ENCODE measurements at regions of chr19 and their contacts with region 1.

Region 1: GRCh38 chr19:17292286-17293097 is 10.7 kb downstream of the ABHD8 start:
- DNase-seq: peak; percentile 90
- ATAC-seq: peak; percentile 98
- H3K4me3 Mint-ChIP-seq: peak overlapping the region; percentile 88
- H3K27ac Mint-ChIP-seq: peak overlapping the region; percentile 84
- H3K4me1 Mint-ChIP-seq: peaks cover 5% of the 10 kb centered on the region
- H3K27me3 Mint-ChIP-seq: no peaks in the 10 kb centered on the region

Region 2: GRCh38 chr19:17226002-17226933 is 66.2 kb before region 1 on chr19 and contains the start of gene OCEL1:
- CTCF ChIA-PET with region 1: no interaction called
- POLR2A ChIA-PET with region 1: no interaction called
- intact Hi-C with region 1: loop called in 1 of 2 experiments (anchors 1 kb)
- DNase-seq: peak; percentile 99
- ATAC-seq: peak; percentile 92
- H3K4me3 Mint-ChIP-seq: peak within 1 kb of the TSS; percentile 80
- H3K27ac Mint-ChIP-seq: peak within 1 kb of the TSS; percentile 93
- H3K4me1 Mint-ChIP-seq: peaks cover 7% of the 10 kb centered on the region
- H3K27me3 Mint-ChIP-seq: no peaks in the 10 kb centered on the region
- total RNA-seq, gene OCEL1: 10.9 to 11.7 TPM

Region 3: DNA sequence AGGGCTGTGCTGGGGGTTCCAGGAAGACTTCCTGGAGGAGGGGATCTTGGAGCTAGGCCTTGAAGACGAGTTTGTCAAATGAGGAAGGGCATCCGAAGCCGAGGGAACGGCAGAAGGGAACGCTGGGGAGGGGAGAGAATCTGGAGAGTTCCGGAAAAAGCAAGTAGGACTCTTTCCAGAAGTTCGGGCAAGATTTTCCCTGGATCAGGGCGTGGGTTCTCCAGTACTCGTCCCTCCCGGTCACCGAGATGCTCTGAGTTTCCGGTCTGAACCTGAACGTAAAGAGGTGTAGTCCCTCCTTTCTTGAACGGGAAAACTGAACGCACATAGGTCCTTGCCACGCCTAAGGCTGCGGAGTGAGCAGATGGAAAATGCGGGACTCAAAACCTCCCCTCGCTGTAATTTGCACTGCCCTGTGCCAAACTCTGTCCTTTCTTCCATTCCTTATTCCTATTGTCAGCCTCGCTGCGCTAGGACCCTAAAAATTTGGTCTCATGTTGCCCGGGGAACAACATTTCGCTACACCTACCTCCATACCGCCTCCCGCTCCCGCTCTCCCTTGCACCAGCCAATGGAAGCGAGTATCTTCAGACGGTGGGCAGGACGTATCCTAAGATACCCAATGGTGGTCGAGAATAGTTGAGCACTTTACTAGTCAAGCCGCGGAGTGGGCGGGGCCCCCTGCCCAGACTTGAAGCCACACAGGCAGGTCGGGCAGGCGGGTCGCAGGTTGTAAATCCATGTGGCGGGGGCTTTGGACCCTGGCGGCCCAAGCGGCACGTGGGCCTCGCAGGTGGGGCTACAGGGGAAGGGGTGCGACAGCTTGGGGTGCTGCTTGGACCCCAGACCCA is 44.6 kb after region 1 on chr19 and contains the start of gene GTPBP3:
- CTCF ChIA-PET with region 1: interaction called, 5 read pairs
- POLR2A ChIA-PET with region 1: no interaction called
- intact Hi-C with region 1: loop called in 1 of 2 experiments (anchors 1 kb)
- DNase-seq: peak; percentile 98
- ATAC-seq: peak; percentile 89
- H3K4me3 Mint-ChIP-seq: peak within 1 kb of the TSS; percentile 98
- H3K27ac Mint-ChIP-seq: peak within 1 kb of the TSS; percentile 98
- H3K4me1 Mint-ChIP-seq: peaks cover 25% of the 10 kb centered on the region
- H3K27me3 Mint-ChIP-seq: no peaks in the 10 kb centered on the region
- total RNA-seq, gene GTPBP3: 37.3 to 39.8 TPM

Region 4: GRCh38 chr19:17448131-17448967 is 155.9 kb after region 1 on chr19 and contains the start of gene TMEM221:
- CTCF ChIA-PET with region 1: no interaction called
- POLR2A ChIA-PET with region 1: no interaction called
- intact Hi-C with region 1: loop called in 1 of 2 experiments (anchors 1 kb)
- DNase-seq: peak; percentile 77
- ATAC-seq: peak; percentile 57
- H3K4me3 Mint-ChIP-seq: no peak within 1 kb of the TSS
- H3K27ac Mint-ChIP-seq: no peak within 1 kb of the TSS
- H3K4me1 Mint-ChIP-seq: peaks cover 16% of the 10 kb centered on the region
- H3K27me3 Mint-ChIP-seq: peaks cover 14% of the 10 kb centered on the region
- total RNA-seq, gene TMEM221: not detected

Measured in activated CD4-positive, alpha-beta T cell treated with anti-CD3 and anti-CD28 coated beads for 36 hours (primary cell).